ENCODE measurements at regions of chr10 and their contacts with region 1.

Region 1: GRCh38 chr10:94320285-94320914 is 42.3 kb downstream of the NOC3L start:
- DNase-seq: peak; percentile 15 to 57 (median 40)
- ATAC-seq: peak; percentile 41
- H3K4me3 ChIP-seq: no peak overlapping the region
- H3K4me3 Mint-ChIP-seq: no peak overlapping the region
- H3K27ac ChIP-seq: no peak overlapping the region
- H3K27ac Mint-ChIP-seq: peak overlapping the region in 1 of 9 donors; percentile 19
- H3K4me1 ChIP-seq: no peaks in the 10 kb centered on the region
- H3K4me1 Mint-ChIP-seq: no peaks in the 10 kb centered on the region
- H3K27me3 ChIP-seq: no peaks in the 10 kb centered on the region
- H3K27me3 Mint-ChIP-seq: no peaks in the 10 kb centered on the region

Region 2: DNA sequence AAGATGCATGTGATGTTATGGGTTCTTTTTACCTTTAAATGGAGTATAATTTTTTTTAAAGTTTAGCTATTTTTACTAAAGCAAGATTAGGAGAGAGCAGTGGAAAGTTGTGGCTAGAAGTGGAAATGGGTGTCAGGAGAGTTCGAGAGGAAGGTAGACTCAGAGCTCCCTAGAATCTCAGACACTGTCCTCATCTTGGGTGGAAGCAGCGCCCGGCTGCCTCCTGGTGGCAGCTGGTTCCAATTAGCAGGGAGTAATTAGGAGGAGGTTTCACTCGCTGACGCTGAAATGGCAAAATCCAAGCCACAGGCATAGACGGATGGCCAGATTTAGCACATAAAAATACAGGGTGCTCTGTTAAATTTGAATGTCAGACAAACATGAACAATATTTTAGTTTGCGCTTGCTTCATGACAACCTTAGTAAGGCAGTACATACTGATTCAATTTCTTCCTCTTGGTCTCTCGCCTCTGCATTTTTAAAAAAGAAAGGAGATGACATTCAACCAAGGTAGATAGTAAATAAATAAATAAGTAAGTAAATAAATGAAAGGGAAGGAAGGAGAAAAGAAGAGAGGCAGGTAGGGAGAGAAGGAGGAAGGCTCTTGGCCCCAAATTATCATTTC is 504.2 kb before region 1 on chr10:
- CTCF ChIA-PET with region 1: no interaction called
- POLR2A ChIA-PET with region 1: no interaction called
- intact Hi-C with region 1: loop called in 1 of 2 experiments (anchors 5 kb)
- DNase-seq: peak in 6 of 9 donors; percentile 2 to 22 (median 8)
- ATAC-seq: peak; percentile 57
- H3K4me3 ChIP-seq: no peak overlapping the region
- H3K4me3 Mint-ChIP-seq: no peak overlapping the region
- H3K27ac ChIP-seq: no peak overlapping the region
- H3K27ac Mint-ChIP-seq: no peak overlapping the region
- H3K4me1 ChIP-seq: no peaks in the 10 kb centered on the region
- H3K4me1 Mint-ChIP-seq: peaks cover 0 to 13% (median 8%) of the 10 kb centered on the region in 7 donors
- H3K27me3 ChIP-seq: peaks cover 0 to 4% of the 10 kb centered on the region in 2 donors
- H3K27me3 Mint-ChIP-seq: peaks cover 35 to 50% (median 45%) of the 10 kb centered on the region in 5 donors

Region 3: DNA sequence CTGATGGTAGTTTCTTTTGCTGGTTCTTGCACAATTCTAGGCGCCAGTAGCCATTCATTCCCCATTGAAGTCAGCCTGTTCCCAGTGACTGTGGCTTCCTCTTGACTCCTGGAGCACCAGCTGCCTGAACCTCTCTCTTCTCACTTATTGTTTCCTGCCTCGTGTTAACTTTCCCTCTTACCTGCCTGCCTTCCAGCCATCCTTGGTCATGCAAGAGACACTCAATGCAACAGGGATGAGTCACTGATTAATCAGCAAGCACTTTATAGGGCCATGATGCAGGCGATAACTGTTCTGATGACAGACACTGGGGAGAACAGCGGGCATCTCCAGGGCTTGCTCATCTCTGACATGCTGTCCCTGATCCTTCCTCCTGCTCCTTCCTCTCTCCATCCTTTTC is 204.7 kb before region 1 on chr10:
- CTCF ChIA-PET with region 1: no interaction called
- POLR2A ChIA-PET with region 1: no interaction called
- intact Hi-C with region 1: no loop called
- DNase-seq: no peak
- ATAC-seq: no peak
- H3K4me3 ChIP-seq: no peak overlapping the region
- H3K4me3 Mint-ChIP-seq: no peak overlapping the region
- H3K27ac ChIP-seq: no peak overlapping the region
- H3K27ac Mint-ChIP-seq: no peak overlapping the region
- H3K4me1 ChIP-seq: no peaks in the 10 kb centered on the region
- H3K4me1 Mint-ChIP-seq: no peaks in the 10 kb centered on the region
- H3K27me3 ChIP-seq: no peaks in the 10 kb centered on the region
- H3K27me3 Mint-ChIP-seq: peaks cover 0 to 14% (median 5%) of the 10 kb centered on the region in 5 donors

Region 4: DNA sequence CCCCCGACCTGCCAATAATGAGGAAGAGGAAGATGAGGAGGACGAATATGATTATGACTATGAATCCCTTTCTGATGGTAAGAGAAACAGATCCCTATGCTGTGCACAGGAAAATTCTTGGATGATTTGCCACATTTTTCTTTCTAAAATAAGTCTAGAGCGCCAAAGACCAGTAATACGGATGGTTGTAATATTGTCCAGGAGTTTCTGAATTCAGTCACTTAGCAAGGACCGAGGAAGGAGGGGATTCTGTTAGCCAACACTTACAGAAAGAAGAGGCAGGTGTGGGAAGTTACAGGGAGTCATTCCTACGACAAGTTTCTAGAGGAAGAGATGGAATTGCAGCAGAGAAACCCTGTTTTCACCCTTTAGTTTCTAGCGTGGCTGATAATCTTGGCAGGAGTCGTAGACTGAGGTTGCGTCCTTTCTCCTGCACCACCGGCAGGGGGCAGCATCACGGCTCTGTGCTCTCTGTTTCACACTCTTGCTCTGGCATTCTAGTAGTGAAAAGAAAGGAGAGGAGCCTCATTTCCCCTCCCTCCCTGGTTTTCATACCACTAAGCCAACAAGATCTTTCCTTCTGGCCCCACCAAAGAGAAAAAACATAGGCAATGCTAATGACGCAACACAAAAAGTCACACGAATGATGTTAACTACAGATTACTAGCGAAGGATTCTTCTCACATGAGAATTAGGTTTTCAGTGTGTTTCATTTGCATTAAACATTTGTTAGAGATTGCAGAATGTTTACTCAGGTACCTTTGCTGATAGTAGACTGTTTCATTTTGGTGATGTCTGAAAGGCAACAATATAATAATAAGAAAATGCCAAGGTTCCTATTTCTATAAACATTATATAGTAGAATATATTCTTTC is 40.3 kb before region 1 on chr10:
- CTCF ChIA-PET with region 1: no interaction called
- POLR2A ChIA-PET with region 1: no interaction called
- intact Hi-C with region 1: loop called (anchors 1 kb)
- DNase-seq: peak; percentile 6 to 67 (median 35)
- ATAC-seq: peak; percentile 74
- H3K4me3 ChIP-seq: no peak overlapping the region
- H3K4me3 Mint-ChIP-seq: peak overlapping the region in 1 of 10 donors; percentile 42
- H3K27ac ChIP-seq: no peak overlapping the region
- H3K27ac Mint-ChIP-seq: no peak overlapping the region
- H3K4me1 ChIP-seq: no peaks in the 10 kb centered on the region
- H3K4me1 Mint-ChIP-seq: peaks cover 0 to 11% (median 6%) of the 10 kb centered on the region in 7 donors
- H3K27me3 ChIP-seq: no peaks in the 10 kb centered on the region
- H3K27me3 Mint-ChIP-seq: peaks cover 11 to 28% (median 22%) of the 10 kb centered on the region in 5 donors

Region 5: GRCh38 chr10:94402015-94402842 is 81.8 kb after region 1 on chr10 and contains the start of gene TBC1D12:
- CTCF ChIA-PET with region 1: no interaction called
- POLR2A ChIA-PET with region 1: no interaction called
- intact Hi-C with region 1: no loop called
- DNase-seq: peak in 5 of 9 donors; percentile 7 to 44 (median 20)
- ATAC-seq: peak; percentile 67
- H3K4me3 ChIP-seq: peak within 1 kb of the TSS; percentile 43
- H3K4me3 Mint-ChIP-seq: peak within 1 kb of the TSS; percentile 54 to 90 (median 82)
- H3K27ac ChIP-seq: no peak within 1 kb of the TSS
- H3K27ac Mint-ChIP-seq: no peak within 1 kb of the TSS
- H3K4me1 ChIP-seq: no peaks in the 10 kb centered on the region
- H3K4me1 Mint-ChIP-seq: peaks cover 0 to 12% (median 9%) of the 10 kb centered on the region in 7 donors
- H3K27me3 ChIP-seq: peaks cover 4 to 19% of the 10 kb centered on the region in 2 donors
- H3K27me3 Mint-ChIP-seq: peaks cover 48 to 78% (median 74%) of the 10 kb centered on the region in 5 donors
- total RNA-seq, gene TBC1D12: 0.22 to 3.6 (median 0.60) TPM

Region 6: GRCh38 chr10:94459385-94459784 is 139.0 kb after region 1 on chr10:
- CTCF ChIA-PET with region 1: no interaction called
- POLR2A ChIA-PET with region 1: no interaction called
- intact Hi-C with region 1: no loop called
- DNase-seq: no peak
- ATAC-seq: no peak
- H3K4me3 ChIP-seq: no peak overlapping the region
- H3K4me3 Mint-ChIP-seq: no peak overlapping the region
- H3K27ac ChIP-seq: no peak overlapping the region
- H3K27ac Mint-ChIP-seq: no peak overlapping the region
- H3K4me1 ChIP-seq: no peaks in the 10 kb centered on the region
- H3K4me1 Mint-ChIP-seq: no peaks in the 10 kb centered on the region
- H3K27me3 ChIP-seq: no peaks in the 10 kb centered on the region
- H3K27me3 Mint-ChIP-seq: peaks cover 8 to 28% (median 17%) of the 10 kb centered on the region in 5 donors

Measured in naive thymus-derived CD4-positive, alpha-beta T cell (primary cell).